PC-3 (cell line): ENCODE measurements at regions of chr14 and their contacts with region 1.

Region 1: DNA sequence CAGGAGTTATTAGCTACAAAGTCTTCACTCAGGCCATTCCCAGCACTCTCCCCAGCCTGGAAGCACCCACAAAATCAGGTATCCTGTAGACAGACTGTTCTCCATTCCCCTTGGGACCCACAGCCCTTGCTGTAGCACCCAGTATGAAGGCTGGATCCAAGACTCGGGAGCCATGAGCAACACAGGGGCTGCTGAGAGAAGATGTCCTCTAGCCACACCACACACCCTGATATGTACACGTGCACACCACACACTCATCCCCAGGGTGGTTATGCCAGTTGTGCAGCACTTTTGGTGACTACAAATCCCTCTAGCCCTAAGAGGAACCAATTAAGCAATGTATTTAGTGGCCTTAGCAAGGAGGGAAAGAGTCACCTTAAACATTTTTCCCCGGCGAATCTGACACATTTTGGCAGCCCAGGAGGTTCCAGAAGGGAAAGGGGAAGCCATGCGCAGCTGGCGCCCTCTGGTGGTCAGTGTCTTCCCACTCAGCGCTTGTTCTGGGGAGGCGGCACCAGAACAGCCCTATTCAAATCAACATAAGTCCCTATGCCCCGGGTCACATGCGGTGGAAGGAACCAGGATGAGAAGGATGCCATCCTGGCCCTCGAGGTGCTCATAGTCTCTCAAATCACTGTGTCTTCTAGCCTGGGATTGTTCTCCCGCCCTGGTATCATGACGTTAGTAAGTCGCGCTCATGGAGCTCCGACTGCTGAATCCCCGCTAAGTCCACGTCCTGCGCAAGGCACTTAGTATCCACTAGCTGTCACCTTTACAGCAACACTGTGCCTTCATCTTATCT is 96.9 kb downstream of the GCH1 start:
- DNase-seq: peak; percentile 99
- ATAC-seq: peak; percentile 98
- H3K4me3 ChIP-seq: peak overlapping the region; percentile 42
- H3K27ac ChIP-seq: no peak overlapping the region
- H3K4me1 ChIP-seq: peaks cover 5% of the 10 kb centered on the region
- H3K27me3 ChIP-seq: no peaks in the 10 kb centered on the region
- CTCF ChIP-seq: peak; percentile 100

Region 2: GRCh38 chr14:54503476-54504257 is 302.1 kb before region 1 on chr14:
- CTCF ChIA-PET with region 1: no interaction called
- POLR2A ChIA-PET with region 1: no interaction called
- intact Hi-C with region 1: loop called (anchors 1 kb)
- DNase-seq: peak; percentile 88
- ATAC-seq: peak; percentile 95
- H3K4me3 ChIP-seq: no peak overlapping the region
- H3K27ac ChIP-seq: no peak overlapping the region
- H3K4me1 ChIP-seq: 0 out of 2 replicates have a peak, but pooled peaks cover 4% of the 10 kb centered on the region
- H3K27me3 ChIP-seq: no peaks in the 10 kb centered on the region
- CTCF ChIP-seq: peak; percentile 92

Region 3: GRCh38 chr14:54555651-54556050 is 250.1 kb before region 1 on chr14:
- CTCF ChIA-PET with region 1: no interaction called
- POLR2A ChIA-PET with region 1: no interaction called
- intact Hi-C with region 1: loop called (anchors 1 kb)
- DNase-seq: peak; percentile 51
- ATAC-seq: peak; percentile 84
- H3K4me3 ChIP-seq: no peak overlapping the region
- H3K27ac ChIP-seq: no peak overlapping the region
- H3K4me1 ChIP-seq: no peaks in the 10 kb centered on the region
- H3K27me3 ChIP-seq: no peaks in the 10 kb centered on the region
- CTCF ChIP-seq: peak; percentile 74

Region 4: DNA sequence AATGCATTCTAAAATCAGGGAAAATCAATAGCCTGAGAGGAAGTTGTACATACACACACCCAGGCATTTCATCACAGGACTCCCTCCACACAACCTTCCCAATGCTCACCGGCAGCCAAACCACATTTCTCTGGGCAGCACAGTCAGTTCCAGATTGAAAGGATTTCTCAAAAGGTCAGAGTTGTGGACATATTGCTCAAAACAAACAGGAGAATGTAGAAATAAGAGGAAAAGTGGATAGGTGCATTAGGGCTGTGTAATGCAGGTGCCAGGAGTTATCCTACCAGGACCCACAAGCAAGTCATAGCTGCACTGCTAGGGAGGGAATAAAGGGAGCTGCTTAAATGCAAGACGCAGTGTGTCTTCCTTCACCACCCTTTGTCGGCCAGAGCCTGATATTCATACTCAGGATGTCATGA is 34.0 kb after region 1 on chr14:
- CTCF ChIA-PET with region 1: no interaction called
- POLR2A ChIA-PET with region 1: no interaction called
- intact Hi-C with region 1: no loop called
- DNase-seq: peak; percentile 40
- ATAC-seq: 0 out of 2 replicates have a peak, but pooled peaks have one; percentile 16
- H3K4me3 ChIP-seq: no peak overlapping the region
- H3K27ac ChIP-seq: no peak overlapping the region
- H3K4me1 ChIP-seq: no peaks in the 10 kb centered on the region
- H3K27me3 ChIP-seq: no peaks in the 10 kb centered on the region
- CTCF ChIP-seq: no peak

Region 5: DNA sequence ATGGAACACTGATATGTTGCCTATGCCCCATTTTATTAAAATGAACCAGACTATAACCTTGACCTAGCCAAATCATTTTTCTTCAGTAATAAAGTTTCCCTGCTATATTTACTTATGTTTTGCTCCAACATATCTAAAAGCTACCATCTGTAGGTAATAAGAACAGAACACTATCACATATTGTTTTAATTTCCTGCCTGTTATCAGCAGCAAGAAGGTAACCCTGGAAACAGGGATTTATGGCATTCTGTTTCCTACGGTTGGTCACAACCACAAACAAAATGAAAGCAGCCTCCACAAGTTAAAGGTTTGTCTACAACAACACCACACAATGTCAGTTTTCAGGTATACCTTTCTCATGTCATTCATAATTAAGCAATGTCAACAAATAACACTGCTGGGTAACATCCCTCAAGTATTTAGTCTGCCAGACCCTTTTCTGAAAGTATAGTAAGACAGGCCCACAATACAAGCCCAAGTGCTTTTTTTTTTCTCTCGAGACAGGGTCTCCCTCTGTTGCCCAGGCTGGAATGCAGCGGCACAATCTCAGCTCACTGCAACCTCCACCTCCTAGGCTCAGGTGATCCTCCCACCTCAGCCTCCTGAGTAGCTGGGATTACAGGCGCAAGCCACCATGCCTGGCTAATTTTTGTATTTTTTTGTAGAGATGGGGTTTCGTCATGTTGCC is 71.4 kb after region 1 on chr14:
- CTCF ChIA-PET with region 1: no interaction called
- POLR2A ChIA-PET with region 1: no interaction called
- intact Hi-C with region 1: loop called (anchors 5 kb)
- DNase-seq: no peak
- ATAC-seq: no peak
- H3K4me3 ChIP-seq: no peak overlapping the region
- H3K27ac ChIP-seq: no peak overlapping the region
- H3K4me1 ChIP-seq: no peaks in the 10 kb centered on the region
- H3K27me3 ChIP-seq: no peaks in the 10 kb centered on the region
- CTCF ChIP-seq: no peak

Region 6: DNA sequence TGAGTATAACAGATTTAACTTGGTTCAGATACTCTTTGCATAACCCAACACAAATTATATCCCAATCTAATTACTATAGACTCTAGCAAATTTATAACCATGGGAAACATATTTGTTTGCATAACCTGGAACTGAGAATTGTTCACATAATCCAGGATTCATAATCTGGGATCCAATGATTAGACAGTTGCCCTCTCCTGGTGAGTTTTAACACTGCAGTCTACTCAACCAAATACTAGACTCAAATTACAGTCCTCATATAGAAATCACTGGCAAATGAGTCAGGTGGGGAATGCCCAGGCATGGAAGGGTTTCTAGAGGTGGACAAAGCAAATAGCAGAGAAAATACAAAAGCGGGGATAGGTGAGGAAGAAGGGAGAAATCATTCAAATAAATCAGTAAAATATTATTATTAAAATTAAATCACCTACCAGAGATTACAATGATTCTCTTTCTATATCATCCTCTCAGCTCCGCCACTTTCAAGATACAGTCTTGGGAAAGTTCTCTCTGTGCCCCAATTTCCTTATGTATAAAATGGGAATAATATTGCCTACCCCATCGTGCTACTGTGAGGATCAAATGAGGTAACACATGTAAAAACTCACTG is 87.5 kb after region 1 on chr14:
- CTCF ChIA-PET with region 1: no interaction called
- POLR2A ChIA-PET with region 1: interaction called, 3 read pairs
- intact Hi-C with region 1: loop called (anchors 1 kb)
- DNase-seq: peak; percentile 99
- ATAC-seq: peak; percentile 65
- H3K4me3 ChIP-seq: no peak overlapping the region
- H3K27ac ChIP-seq: no peak overlapping the region
- H3K4me1 ChIP-seq: peaks cover 9% of the 10 kb centered on the region; the same call in 1 of the 2 replicates
- H3K27me3 ChIP-seq: no peaks in the 10 kb centered on the region
- CTCF ChIP-seq: peak; percentile 97